ENCODE measurements at regions of chr1 and their contacts with region 1.

Region 1: GRCh38 chr1:27662707-27663393 is 9.1 kb downstream of the IFI6 start:
- DNase-seq: peak; percentile 70 to 84
- H3K4me3 ChIP-seq: no peak overlapping the region
- H3K4me3 Mint-ChIP-seq: no peak overlapping the region
- H3K27ac Mint-ChIP-seq: peak overlapping the region; percentile 42
- H3K4me1 ChIP-seq: peaks cover 10% of the 10 kb centered on the region
- H3K4me1 Mint-ChIP-seq: peaks cover 15% of the 10 kb centered on the region
- H3K27me3 ChIP-seq: no peaks in the 10 kb centered on the region
- H3K27me3 Mint-ChIP-seq: no peaks in the 10 kb centered on the region
- CTCF ChIP-seq: peak; percentile 72 to 75

Region 2: GRCh38 chr1:27392096-27392777 is 270.6 kb before region 1 on chr1 and contains the start of gene GPR3:
- CTCF ChIA-PET with region 1: interaction called, 3 read pairs
- POLR2A ChIA-PET with region 1: no interaction called
- intact Hi-C with region 1: loop called (anchors 5 kb)
- DNase-seq: peak; percentile 90
- H3K4me3 ChIP-seq: peak within 1 kb of the TSS; percentile 42
- H3K4me3 Mint-ChIP-seq: peak within 1 kb of the TSS; percentile 73
- H3K27ac Mint-ChIP-seq: peak within 1 kb of the TSS; percentile 62
- H3K4me1 ChIP-seq: no peaks in the 10 kb centered on the region
- H3K4me1 Mint-ChIP-seq: peaks cover 7% of the 10 kb centered on the region
- H3K27me3 ChIP-seq: no peaks in the 10 kb centered on the region
- H3K27me3 Mint-ChIP-seq: no peaks in the 10 kb centered on the region
- CTCF ChIP-seq: peak; percentile 34 to 86
- total RNA-seq, gene GPR3: 0.91 and 1.2 TPM in 2 replicates

Region 3: GRCh38 chr1:27489910-27490741 is 172.7 kb before region 1 on chr1 and contains the start of gene WASF2:
- CTCF ChIA-PET with region 1: no interaction called
- POLR2A ChIA-PET with region 1: interaction called, 28 read pairs
- intact Hi-C with region 1: no loop called
- DNase-seq: peak; percentile 95 to 96
- H3K4me3 ChIP-seq: peak within 1 kb of the TSS; percentile 91
- H3K4me3 Mint-ChIP-seq: peak within 1 kb of the TSS; percentile 93
- H3K27ac Mint-ChIP-seq: peak within 1 kb of the TSS; percentile 100
- H3K4me1 ChIP-seq: peaks cover 11% of the 10 kb centered on the region
- H3K4me1 Mint-ChIP-seq: peaks cover 6% of the 10 kb centered on the region
- H3K27me3 ChIP-seq: no peaks in the 10 kb centered on the region
- H3K27me3 Mint-ChIP-seq: no peaks in the 10 kb centered on the region
- CTCF ChIP-seq: no peak
- total RNA-seq, gene WASF2: 59.2 and 68.6 TPM in 2 replicates

Region 4: DNA sequence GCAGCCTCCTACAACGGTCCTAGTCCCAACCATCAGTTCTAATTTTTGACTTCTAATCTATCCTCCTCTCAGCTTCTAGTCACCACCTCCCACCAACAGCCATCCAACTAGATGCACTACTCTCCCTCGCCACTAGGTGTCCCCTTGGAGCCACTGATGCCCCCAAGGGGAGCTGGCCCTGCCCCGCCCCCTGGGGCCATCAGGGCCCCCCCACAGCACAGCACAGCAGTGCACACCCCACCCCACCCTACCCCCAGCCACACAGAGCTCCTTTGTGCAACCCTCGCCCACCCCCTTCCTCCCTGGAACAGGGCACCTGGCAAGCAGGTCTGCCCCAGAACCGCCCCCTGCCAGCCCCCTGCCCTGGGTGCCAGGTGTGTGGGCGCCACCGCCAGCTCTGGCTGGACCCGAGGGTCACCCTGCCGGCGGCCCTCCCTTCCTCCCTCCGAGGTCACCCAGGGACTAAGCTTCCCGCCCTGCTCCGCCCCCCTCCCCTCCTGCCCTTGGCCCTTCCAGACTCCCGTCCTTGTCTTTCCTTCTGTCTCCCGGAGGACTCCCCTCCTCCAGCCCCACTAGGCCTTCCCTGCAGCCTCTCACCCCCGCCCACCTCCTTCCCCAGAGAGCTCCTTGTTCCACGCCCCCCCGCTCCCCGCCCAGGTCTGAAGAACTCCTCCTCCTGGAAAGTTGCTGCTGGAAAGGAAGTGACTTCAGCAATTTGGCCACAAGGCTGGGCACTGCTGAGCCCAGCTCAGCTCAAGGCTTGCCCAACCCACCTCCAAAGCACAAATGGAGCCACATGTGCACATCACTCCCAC is 105.9 kb before region 1 on chr1:
- CTCF ChIA-PET with region 1: interaction called, 8 read pairs
- POLR2A ChIA-PET with region 1: no interaction called
- intact Hi-C with region 1: loop called (anchors 2 kb)
- DNase-seq: peak; percentile 76 to 91
- H3K4me3 ChIP-seq: peak overlapping the region; percentile 6; the same call in 1 of the 2 replicates
- H3K4me3 Mint-ChIP-seq: peak overlapping the region; percentile 3
- H3K27ac Mint-ChIP-seq: peak overlapping the region; percentile 53
- H3K4me1 ChIP-seq: peaks cover 16% of the 10 kb centered on the region
- H3K4me1 Mint-ChIP-seq: peaks cover 28% of the 10 kb centered on the region
- H3K27me3 ChIP-seq: no peaks in the 10 kb centered on the region
- H3K27me3 Mint-ChIP-seq: no peaks in the 10 kb centered on the region
- CTCF ChIP-seq: peak; percentile 84

Region 5: DNA sequence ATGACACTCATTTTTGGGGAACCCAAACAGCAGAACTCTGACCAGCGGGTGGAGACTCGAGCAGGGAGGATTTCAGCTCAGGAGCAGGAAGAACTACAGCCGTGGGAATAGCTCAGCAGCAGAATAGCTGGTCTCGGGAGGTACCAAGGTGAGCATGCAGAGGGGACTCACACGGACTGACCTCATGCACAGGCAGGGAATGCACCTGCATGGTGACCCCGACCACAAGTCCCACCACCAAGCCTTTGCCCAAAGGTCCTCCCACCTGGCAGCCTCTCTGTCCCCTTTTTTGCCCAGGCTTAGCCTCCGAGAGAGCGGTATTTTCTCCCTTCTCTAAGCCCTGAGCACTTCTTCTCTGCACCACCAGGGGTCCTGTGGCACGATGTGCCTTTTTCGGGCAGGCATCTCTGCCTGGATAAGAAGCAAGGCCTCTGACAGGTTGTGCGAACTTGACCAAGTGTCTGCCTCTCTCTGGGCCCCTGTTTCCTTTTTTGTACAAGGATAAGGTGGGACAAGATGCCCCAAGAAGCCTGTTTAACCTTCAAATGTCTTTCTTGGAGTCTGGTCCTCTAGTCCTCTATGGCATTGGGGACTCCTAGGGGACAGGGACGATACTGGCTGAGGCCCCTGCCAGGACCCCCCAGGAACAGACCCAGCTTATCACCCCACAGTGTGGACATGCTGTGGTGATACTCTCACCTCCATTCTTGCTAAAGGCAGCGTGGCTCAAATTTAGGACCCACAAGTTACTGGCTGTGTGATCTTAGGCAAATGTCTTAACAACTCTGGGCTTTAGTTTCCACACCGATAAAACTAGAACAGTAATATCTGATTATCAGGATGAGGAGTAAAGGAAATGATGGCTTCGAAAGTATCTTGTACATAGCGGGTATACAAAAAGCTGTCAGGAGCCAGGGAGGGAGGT is 18.9 kb before region 1 on chr1:
- CTCF ChIA-PET with region 1: interaction called, 8 read pairs
- POLR2A ChIA-PET with region 1: no interaction called
- intact Hi-C with region 1: loop called (anchors 1 kb)
- DNase-seq: peak in 1 of 2 experiments; percentile 55
- H3K4me3 ChIP-seq: no peak overlapping the region
- H3K4me3 Mint-ChIP-seq: no peak overlapping the region
- H3K27ac Mint-ChIP-seq: no peak overlapping the region
- H3K4me1 ChIP-seq: no peaks in the 10 kb centered on the region
- H3K4me1 Mint-ChIP-seq: no peaks in the 10 kb centered on the region
- H3K27me3 ChIP-seq: no peaks in the 10 kb centered on the region
- H3K27me3 Mint-ChIP-seq: no peaks in the 10 kb centered on the region
- CTCF ChIP-seq: peak; percentile 63 to 75

Measured in Caco-2 (cell line).